CD4-positive, alpha-beta memory T cell (primary cell): ENCODE measurements at regions of chr17 and their contacts with region 1.

Region 1: DNA sequence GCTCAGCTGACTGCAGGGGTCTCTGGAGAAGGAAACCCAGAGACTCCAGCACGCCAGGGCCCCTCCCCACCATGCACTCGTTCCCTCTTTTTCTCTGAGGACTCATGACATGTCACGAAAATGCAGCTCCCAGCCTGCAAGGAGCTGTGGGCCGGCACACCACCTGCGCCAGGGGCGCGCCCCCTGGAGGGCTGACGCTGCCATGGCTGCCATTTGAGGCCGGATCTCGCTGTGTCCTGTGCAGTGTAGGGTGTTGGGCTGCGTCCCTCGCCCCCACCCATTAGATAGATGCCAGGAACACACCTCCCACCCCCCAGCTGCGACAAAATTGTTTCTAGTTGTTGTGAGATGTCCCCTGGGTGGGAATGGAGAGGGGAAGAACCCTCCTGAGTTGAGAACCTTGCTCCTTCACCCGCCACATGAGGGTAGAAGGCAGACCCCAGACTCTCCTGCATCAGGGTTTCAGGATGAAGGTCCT is 8.2 kb downstream of the SYNGR2 start:
- DNase-seq: peak; percentile 68 to 77 (median 72)
- H3K4me3 ChIP-seq: no peak overlapping the region
- H3K4me3 Mint-ChIP-seq: no peak overlapping the region
- H3K27ac ChIP-seq: no peak overlapping the region
- H3K27ac Mint-ChIP-seq: peak overlapping the region in 1 of 7 donors; percentile 8
- H3K4me1 ChIP-seq: peaks cover 35% of the 10 kb centered on the region
- H3K4me1 Mint-ChIP-seq: peaks cover 24 to 49% (median 38%) of the 10 kb centered on the region in 4 donors
- H3K27me3 ChIP-seq: no peaks in the 10 kb centered on the region
- H3K27me3 Mint-ChIP-seq: no peaks in the 10 kb centered on the region

Region 2: GRCh38 chr17:78019367-78019975 is 157.1 kb before region 1 on chr17:
- CTCF ChIA-PET with region 1: interaction called, 9 read pairs
- POLR2A ChIA-PET with region 1: interaction called, 3 read pairs
- intact Hi-C with region 1: loop called (anchors 1 kb)
- DNase-seq: peak in 4 of 5 donors; percentile 26 to 38 (median 29)
- H3K4me3 ChIP-seq: no peak overlapping the region
- H3K4me3 Mint-ChIP-seq: peak overlapping the region in 2 of 8 donors; percentile 21 to 71
- H3K27ac ChIP-seq: peak overlapping the region; percentile 12
- H3K27ac Mint-ChIP-seq: peak overlapping the region in 5 of 7 donors; percentile 25 to 70 (median 33)
- H3K4me1 ChIP-seq: peaks cover 23% of the 10 kb centered on the region
- H3K4me1 Mint-ChIP-seq: peaks cover 20 to 31% (median 24%) of the 10 kb centered on the region in 4 donors
- H3K27me3 ChIP-seq: no peaks in the 10 kb centered on the region
- H3K27me3 Mint-ChIP-seq: no peaks in the 10 kb centered on the region

Region 3: GRCh38 chr17:78107457-78107856 is 69.1 kb before region 1 on chr17:
- CTCF ChIA-PET with region 1: interaction called, 36 read pairs
- POLR2A ChIA-PET with region 1: interaction called, 12 read pairs
- intact Hi-C with region 1: loop called (anchors 1 kb)
- DNase-seq: no peak
- H3K4me3 ChIP-seq: no peak overlapping the region
- H3K4me3 Mint-ChIP-seq: no peak overlapping the region
- H3K27ac ChIP-seq: no peak overlapping the region
- H3K27ac Mint-ChIP-seq: peak overlapping the region in 6 of 7 donors; percentile 22 to 76 (median 53)
- H3K4me1 ChIP-seq: peaks cover 6% of the 10 kb centered on the region
- H3K4me1 Mint-ChIP-seq: peaks cover 10 to 25% (median 19%) of the 10 kb centered on the region in 4 donors
- H3K27me3 ChIP-seq: no peaks in the 10 kb centered on the region
- H3K27me3 Mint-ChIP-seq: no peaks in the 10 kb centered on the region

Region 4: GRCh38 chr17:78120971-78121800 is 55.4 kb before region 1 on chr17:
- CTCF ChIA-PET with region 1: interaction called, 19 read pairs
- POLR2A ChIA-PET with region 1: interaction called, 11 read pairs
- intact Hi-C with region 1: no loop called
- DNase-seq: peak; percentile 77 to 81 (median 78)
- H3K4me3 ChIP-seq: peak overlapping the region; percentile 22 to 69
- H3K4me3 Mint-ChIP-seq: peak overlapping the region; percentile 84 to 92 (median 89)
- H3K27ac ChIP-seq: peak overlapping the region; percentile 81
- H3K27ac Mint-ChIP-seq: peak overlapping the region; percentile 77 to 96 (median 91)
- H3K4me1 ChIP-seq: peaks cover 91% of the 10 kb centered on the region
- H3K4me1 Mint-ChIP-seq: peaks cover 26 to 69% (median 51%) of the 10 kb centered on the region in 4 donors
- H3K27me3 ChIP-seq: no peaks in the 10 kb centered on the region
- H3K27me3 Mint-ChIP-seq: no peaks in the 10 kb centered on the region

Region 5: GRCh38 chr17:78140169-78140976 is 36.2 kb before region 1 on chr17:
- CTCF ChIA-PET with region 1: interaction called, 57 read pairs
- POLR2A ChIA-PET with region 1: interaction called, 170 read pairs
- intact Hi-C with region 1: no loop called
- DNase-seq: peak; percentile 95 to 97 (median 96)
- H3K4me3 ChIP-seq: peak overlapping the region in 1 of 2 donors; percentile 2
- H3K4me3 Mint-ChIP-seq: peak overlapping the region; percentile 30 to 72 (median 58)
- H3K27ac ChIP-seq: peak overlapping the region; percentile 0
- H3K27ac Mint-ChIP-seq: peak overlapping the region; percentile 82 to 94 (median 91)
- H3K4me1 ChIP-seq: peaks cover 87% of the 10 kb centered on the region
- H3K4me1 Mint-ChIP-seq: peaks cover 29 to 82% (median 53%) of the 10 kb centered on the region in 4 donors
- H3K27me3 ChIP-seq: no peaks in the 10 kb centered on the region
- H3K27me3 Mint-ChIP-seq: no peaks in the 10 kb centered on the region

Region 6: GRCh38 chr17:78231991-78232858 is 55.6 kb after region 1 on chr17:
- CTCF ChIA-PET with region 1: no interaction called
- POLR2A ChIA-PET with region 1: no interaction called
- intact Hi-C with region 1: no loop called
- DNase-seq: peak in 3 of 5 donors; percentile 14 to 21 (median 20)
- H3K4me3 ChIP-seq: no peak overlapping the region
- H3K4me3 Mint-ChIP-seq: peak overlapping the region in 1 of 8 donors; percentile 9
- H3K27ac ChIP-seq: no peak overlapping the region
- H3K27ac Mint-ChIP-seq: no peak overlapping the region
- H3K4me1 ChIP-seq: peaks cover 3% of the 10 kb centered on the region
- H3K4me1 Mint-ChIP-seq: peaks cover 0 to 7% (median 3%) of the 10 kb centered on the region in 4 donors
- H3K27me3 ChIP-seq: peaks cover 12% of the 10 kb centered on the region
- H3K27me3 Mint-ChIP-seq: peaks cover 12 to 19% of the 10 kb centered on the region in 2 donors

Region 7: DNA sequence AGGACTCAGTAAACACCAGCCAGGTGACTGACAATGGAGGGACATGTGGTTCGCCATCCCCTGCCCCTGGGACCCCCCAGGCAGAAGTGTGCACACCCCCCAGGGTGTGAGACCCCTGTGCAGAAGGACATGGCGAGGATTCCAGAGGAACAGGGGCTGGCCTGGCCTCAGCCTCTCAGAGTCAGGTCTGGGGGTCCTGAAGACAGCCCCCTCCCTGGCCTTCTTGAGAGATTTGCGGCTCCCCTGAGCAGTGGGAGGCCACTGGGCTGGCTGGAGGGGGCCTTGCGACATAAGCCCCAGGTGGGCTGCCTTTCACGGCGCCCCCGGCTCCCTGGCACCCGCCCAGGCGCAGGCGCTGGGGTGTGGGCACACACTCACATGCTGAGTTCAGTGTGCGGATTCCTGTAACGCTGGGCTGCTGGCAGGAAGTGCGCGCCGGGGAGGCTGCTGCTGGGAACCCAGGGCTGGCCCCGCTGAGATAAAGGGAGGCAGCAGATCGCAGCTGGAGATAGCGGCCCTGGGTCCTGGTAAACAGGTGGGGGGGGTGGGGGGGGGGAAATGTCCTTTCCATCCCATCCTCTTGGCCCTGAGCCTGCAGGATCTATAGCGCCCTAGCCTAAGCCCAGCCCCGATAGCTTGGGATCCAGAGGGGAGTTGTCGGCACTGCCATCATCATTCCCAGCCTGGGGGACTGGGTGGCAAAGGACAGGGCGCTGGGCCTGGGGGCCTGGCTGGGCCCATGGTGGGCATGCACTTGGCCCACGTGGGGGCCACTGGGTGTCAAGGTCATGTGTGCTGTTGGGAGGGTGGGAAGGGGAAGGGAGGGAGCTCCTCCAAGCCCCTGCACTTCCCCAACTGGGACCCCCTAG is 82.0 kb after region 1 on chr17:
- CTCF ChIA-PET with region 1: no interaction called
- POLR2A ChIA-PET with region 1: no interaction called
- intact Hi-C with region 1: no loop called
- DNase-seq: peak; percentile 71 to 79 (median 72)
- H3K4me3 ChIP-seq: peak overlapping the region; percentile 51 to 57
- H3K4me3 Mint-ChIP-seq: peak overlapping the region; percentile 43 to 94 (median 74)
- H3K27ac ChIP-seq: peak overlapping the region; percentile 47
- H3K27ac Mint-ChIP-seq: peak overlapping the region; percentile 80 to 96 (median 90)
- H3K4me1 ChIP-seq: peaks cover 89% of the 10 kb centered on the region
- H3K4me1 Mint-ChIP-seq: peaks cover 21 to 81% (median 53%) of the 10 kb centered on the region in 4 donors
- H3K27me3 ChIP-seq: no peaks in the 10 kb centered on the region
- H3K27me3 Mint-ChIP-seq: peaks cover 0 to 1% of the 10 kb centered on the region in 2 donors